AG04450 (cell line): ENCODE measurements at regions of chr6 and their contacts with region 1.

Region 1: DNA sequence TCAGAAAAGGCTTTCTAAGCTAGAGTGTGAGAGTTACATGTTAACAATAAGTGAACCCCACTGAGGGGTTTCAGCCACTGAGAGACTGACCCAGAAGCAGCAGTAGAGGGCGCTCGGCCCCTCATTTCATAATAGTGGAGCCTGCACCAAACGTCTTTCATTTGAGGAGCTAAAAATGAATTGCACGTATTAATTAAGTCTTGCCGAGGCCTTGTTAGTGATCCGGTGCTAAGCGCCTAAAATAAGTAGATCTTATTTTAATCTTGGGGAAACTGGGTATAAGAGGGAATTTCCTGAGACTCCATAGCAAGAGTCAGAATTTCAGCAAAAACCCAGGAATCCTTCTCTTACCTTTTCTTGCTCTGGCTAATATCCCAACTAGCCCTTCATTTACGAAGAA is 209.7 kb downstream of the FARS2 start:
- DNase-seq: peak; percentile 29
- H3K4me3 ChIP-seq: no peak overlapping the region
- H3K27ac ChIP-seq: no peak overlapping the region
- H3K27me3 ChIP-seq: no peaks in the 10 kb centered on the region
- CTCF ChIP-seq: peak; percentile 94

Region 2: GRCh38 chr6:5457041-5457440 is 14.0 kb before region 1 on chr6:
- CTCF ChIA-PET with region 1: interaction called, 21 read pairs
- POLR2A ChIA-PET with region 1: no interaction called
- DNase-seq: no peak
- H3K4me3 ChIP-seq: no peak overlapping the region
- H3K27ac ChIP-seq: no peak overlapping the region
- H3K27me3 ChIP-seq: no peaks in the 10 kb centered on the region
- CTCF ChIP-seq: no peak

Region 3: GRCh38 chr6:5486214-5486613 is 15.2 kb after region 1 on chr6:
- CTCF ChIA-PET with region 1: interaction called, 48 read pairs
- POLR2A ChIA-PET with region 1: no interaction called
- DNase-seq: no peak
- H3K4me3 ChIP-seq: no peak overlapping the region
- H3K27ac ChIP-seq: no peak overlapping the region
- H3K27me3 ChIP-seq: no peaks in the 10 kb centered on the region
- CTCF ChIP-seq: no peak

Region 4: GRCh38 chr6:5493806-5494205 is 22.8 kb after region 1 on chr6:
- CTCF ChIA-PET with region 1: interaction called, 17 read pairs
- POLR2A ChIA-PET with region 1: no interaction called
- DNase-seq: no peak
- H3K4me3 ChIP-seq: no peak overlapping the region
- H3K27ac ChIP-seq: no peak overlapping the region
- H3K27me3 ChIP-seq: no peaks in the 10 kb centered on the region
- CTCF ChIP-seq: no peak

Region 5: GRCh38 chr6:5866547-5867101 is 395.6 kb after region 1 on chr6:
- CTCF ChIA-PET with region 1: interaction called, 10 read pairs
- POLR2A ChIA-PET with region 1: no interaction called
- DNase-seq: no peak
- H3K4me3 ChIP-seq: peak overlapping the region; percentile 14
- H3K27ac ChIP-seq: no peak overlapping the region
- H3K27me3 ChIP-seq: no peaks in the 10 kb centered on the region
- CTCF ChIP-seq: no peak